B cell (primary cell): ENCODE measurements at regions of chr3 and their contacts with region 1.

Region 1: DNA sequence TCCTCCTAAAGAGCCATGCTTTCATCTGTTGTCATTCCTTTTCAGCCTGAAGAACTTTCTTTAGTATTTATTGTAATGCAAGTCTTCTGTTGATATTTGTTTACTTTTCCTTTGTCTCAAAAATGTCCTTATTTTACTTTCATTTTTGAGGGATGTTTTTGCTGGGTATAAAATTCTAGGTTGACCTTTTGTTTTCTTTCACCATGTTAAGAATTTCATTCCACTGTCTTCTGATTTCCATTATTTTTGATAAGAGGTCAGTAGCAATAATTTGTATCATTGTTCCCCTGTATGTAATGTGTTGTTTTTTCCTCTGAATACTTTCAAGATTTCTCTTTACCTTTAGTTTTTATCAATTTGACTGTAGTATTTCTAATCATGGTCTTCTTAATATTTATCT is 91.1 kb downstream of the RSRC1 start:
- DNase-seq: no peak
- ATAC-seq: no peak
- H3K4me3 ChIP-seq: no peak overlapping the region
- H3K4me3 Mint-ChIP-seq: no peak overlapping the region
- H3K27ac ChIP-seq: no peak overlapping the region
- H3K27ac Mint-ChIP-seq: no peak overlapping the region
- H3K4me1 ChIP-seq: no peaks in the 10 kb centered on the region
- H3K4me1 Mint-ChIP-seq: no peaks in the 10 kb centered on the region
- H3K27me3 ChIP-seq: no peaks in the 10 kb centered on the region
- H3K27me3 Mint-ChIP-seq: no peaks in the 10 kb centered on the region
- CTCF ChIP-seq: no peak

Region 2: GRCh38 chr3:158213459-158213858 is 12.5 kb after region 1 on chr3:
- CTCF ChIA-PET with region 1: no interaction called
- POLR2A ChIA-PET with region 1: no interaction called
- intact Hi-C with region 1: loop called (anchors 2 kb)
- DNase-seq: no peak
- ATAC-seq: no peak
- H3K4me3 ChIP-seq: no peak overlapping the region
- H3K4me3 Mint-ChIP-seq: no peak overlapping the region
- H3K27ac ChIP-seq: no peak overlapping the region
- H3K27ac Mint-ChIP-seq: no peak overlapping the region
- H3K4me1 ChIP-seq: no peaks in the 10 kb centered on the region
- H3K4me1 Mint-ChIP-seq: no peaks in the 10 kb centered on the region
- H3K27me3 ChIP-seq: no peaks in the 10 kb centered on the region
- H3K27me3 Mint-ChIP-seq: no peaks in the 10 kb centered on the region
- CTCF ChIP-seq: no peak